ENCODE measurements at regions of chr5 and their contacts with region 1.

Region 1: DNA sequence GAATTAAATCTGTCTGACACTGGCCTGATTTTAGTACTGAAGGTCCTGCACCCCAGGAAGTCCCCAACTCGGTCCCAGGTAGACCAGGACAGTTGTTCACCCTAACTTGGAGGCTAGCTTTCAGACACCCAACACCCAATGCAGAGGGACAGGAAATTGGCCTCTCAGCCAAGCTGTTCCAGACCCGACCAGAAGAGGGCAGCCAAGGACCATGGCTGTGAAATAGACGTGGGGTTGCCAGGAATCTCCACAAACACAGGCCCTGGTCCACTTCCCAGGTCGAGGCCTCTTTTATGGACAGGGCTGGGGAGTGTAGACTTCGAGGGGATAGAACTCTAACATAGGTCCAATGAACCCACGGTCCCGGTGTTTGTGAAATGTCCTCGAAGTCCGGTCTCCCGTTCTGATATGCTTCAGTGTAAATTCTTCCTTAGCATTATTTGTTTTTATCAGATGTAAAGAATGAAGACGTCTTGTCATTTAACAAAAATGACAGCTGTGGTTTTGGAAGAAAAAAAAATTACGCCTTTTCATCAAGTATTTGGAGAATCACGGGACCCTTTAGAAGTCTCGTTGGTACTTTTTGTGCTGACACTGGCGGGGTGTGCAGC is 260.3 kb upstream of the ADAMTS16 start:
- DNase-seq: peak; percentile 51 to 79 (median 67)
- ATAC-seq: peak; percentile 57 to 88 (median 76)
- H3K4me3 ChIP-seq: no peak overlapping the region
- H3K27ac ChIP-seq: no peak overlapping the region
- H3K4me1 ChIP-seq: no peaks in the 10 kb centered on the region
- H3K27me3 ChIP-seq: peaks cover 0 to 1% (median 0%) of the 10 kb centered on the region in 9 donors
- CTCF ChIP-seq: peak; percentile 76 to 90 (median 86)
- POLR2A ChIP-seq: no peak

Region 2: DNA sequence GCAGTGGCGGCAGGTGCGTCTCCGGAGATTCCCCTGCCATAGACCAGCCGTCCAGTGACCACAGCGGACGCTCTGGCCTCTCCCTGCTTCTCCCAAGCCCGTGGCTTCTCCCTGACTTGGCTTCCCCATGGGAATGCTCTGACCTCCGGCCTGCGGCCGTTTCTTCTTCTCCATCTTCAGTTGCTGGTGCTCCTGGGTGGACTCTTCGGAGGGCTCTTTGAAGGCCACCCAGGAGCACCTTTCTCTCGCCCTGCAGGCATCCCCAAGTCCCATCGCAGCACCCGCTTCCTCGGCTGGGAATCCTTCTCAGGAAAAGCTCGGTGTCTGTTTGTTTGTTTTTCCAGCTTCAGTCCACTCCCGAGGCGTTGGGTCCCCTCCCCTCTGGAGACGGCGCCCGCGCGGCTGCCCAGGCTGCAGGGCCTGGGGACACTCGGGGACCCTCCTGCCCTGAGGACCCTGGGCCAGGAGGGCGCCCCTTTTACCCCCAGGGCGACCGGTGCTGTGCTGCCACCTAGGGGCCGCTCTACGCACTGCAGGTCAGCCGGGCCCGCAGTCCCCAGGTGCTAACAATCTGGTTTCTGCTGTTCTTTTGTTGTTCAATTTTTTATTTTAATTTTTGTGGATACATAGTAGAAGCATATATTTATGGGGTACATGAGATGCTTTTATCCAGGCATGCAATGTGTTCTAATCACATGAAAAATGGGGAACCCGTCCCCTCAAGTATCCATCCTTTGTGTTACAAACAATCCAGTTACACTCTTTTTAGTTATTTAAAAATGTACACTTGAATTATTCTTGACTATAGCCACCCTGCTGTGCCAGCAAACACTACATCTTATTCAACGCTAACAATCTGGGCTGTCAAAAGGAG is 62.4 kb after region 1 on chr5:
- intact Hi-C with region 1: loop called in 3 of 10 experiments (anchors 2 to 5 kb)
- DNase-seq: peak in 1 of 5 donors; percentile 23
- ATAC-seq: no peak
- H3K4me3 ChIP-seq: no peak overlapping the region
- H3K27ac ChIP-seq: no peak overlapping the region
- H3K4me1 ChIP-seq: no peaks in the 10 kb centered on the region
- H3K27me3 ChIP-seq: peaks cover 0 to 11% (median 0%) of the 10 kb centered on the region in 9 donors
- CTCF ChIP-seq: peak; percentile 59 to 78 (median 73)
- POLR2A ChIP-seq: no peak

Region 3: GRCh38 chr5:5141625-5142532 is 262.1 kb after region 1 on chr5:
- intact Hi-C with region 1: loop called in 3 of 10 experiments (anchors 2 to 10 kb)
- DNase-seq: peak in 3 of 5 donors; percentile 48 to 50 (median 50)
- ATAC-seq: peak in 1 of 4 donors; percentile 60
- H3K4me3 ChIP-seq: no peak overlapping the region
- H3K27ac ChIP-seq: no peak overlapping the region
- H3K4me1 ChIP-seq: peaks cover 3 to 22% (median 8%) of the 10 kb centered on the region in 12 donors
- H3K27me3 ChIP-seq: peaks cover 15 to 38% (median 26%) of the 10 kb centered on the region in 9 donors
- CTCF ChIP-seq: peak; percentile 64 to 94 (median 81)
- POLR2A ChIP-seq: no peak

Region 4: GRCh38 chr5:5404381-5404780 is 524.6 kb after region 1 on chr5:
- intact Hi-C with region 1: loop called in 2 of 10 experiments (anchors 5 kb)
- DNase-seq: no peak
- ATAC-seq: no peak
- H3K4me3 ChIP-seq: no peak overlapping the region
- H3K27ac ChIP-seq: no peak overlapping the region
- H3K4me1 ChIP-seq: no peaks in the 10 kb centered on the region
- H3K27me3 ChIP-seq: no peaks in the 10 kb centered on the region
- CTCF ChIP-seq: no peak
- POLR2A ChIP-seq: no peak

Region 5: DNA sequence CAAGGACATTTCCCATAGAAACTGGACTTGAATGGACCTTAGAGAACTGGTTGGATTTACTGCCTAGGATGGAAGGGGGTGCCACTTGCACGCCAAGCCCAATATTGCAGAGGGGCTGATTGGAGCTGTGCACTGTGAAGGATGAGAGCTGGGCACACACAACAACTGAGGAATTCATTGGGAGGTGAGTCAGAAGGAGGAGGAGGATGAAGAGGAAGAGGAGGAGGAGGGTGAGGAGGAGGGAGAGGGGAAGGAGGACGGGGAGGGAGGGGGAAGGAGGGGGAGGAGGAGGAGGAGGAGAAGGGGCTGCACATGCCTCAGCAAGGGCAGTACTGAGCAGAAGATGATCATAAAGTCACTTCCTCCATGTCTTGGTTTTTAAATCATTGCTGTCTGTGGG is 536.9 kb after region 1 on chr5:
- intact Hi-C with region 1: loop called (anchors 2 to 5 kb)
- DNase-seq: no peak
- ATAC-seq: no peak
- H3K4me3 ChIP-seq: no peak overlapping the region
- H3K27ac ChIP-seq: no peak overlapping the region
- H3K4me1 ChIP-seq: peaks cover 0 to 15% (median 9%) of the 10 kb centered on the region in 12 donors
- H3K27me3 ChIP-seq: no peaks in the 10 kb centered on the region
- CTCF ChIP-seq: no peak
- POLR2A ChIP-seq: no peak

Region 6: GRCh38 chr5:5421961-5422818 is 542.4 kb after region 1 on chr5 and contains the start of gene ICE1:
- intact Hi-C with region 1: loop called (anchors 2 to 5 kb)
- DNase-seq: peak; percentile 97 to 99 (median 98)
- ATAC-seq: peak; percentile 98 to 99 (median 99)
- H3K4me3 ChIP-seq: peak within 1 kb of the TSS; percentile 62 to 100 (median 94)
- H3K27ac ChIP-seq: peak within 1 kb of the TSS; percentile 92 to 100 (median 97)
- H3K4me1 ChIP-seq: peaks cover 7 to 51% (median 37%) of the 10 kb centered on the region in 12 donors
- H3K27me3 ChIP-seq: no peaks in the 10 kb centered on the region
- CTCF ChIP-seq: peak in 3 of 12 donors; percentile 12 to 18 (median 16)
- POLR2A ChIP-seq: peak in 1 of 2 donors; percentile 75
- total RNA-seq, gene ICE1: 15.0 to 21.4 (median 19.7) TPM

Measured in heart left ventricle (tissue), 16 donors.